ENCODE measurements at regions of chr7 and their contacts with region 1.

Region 1: DNA sequence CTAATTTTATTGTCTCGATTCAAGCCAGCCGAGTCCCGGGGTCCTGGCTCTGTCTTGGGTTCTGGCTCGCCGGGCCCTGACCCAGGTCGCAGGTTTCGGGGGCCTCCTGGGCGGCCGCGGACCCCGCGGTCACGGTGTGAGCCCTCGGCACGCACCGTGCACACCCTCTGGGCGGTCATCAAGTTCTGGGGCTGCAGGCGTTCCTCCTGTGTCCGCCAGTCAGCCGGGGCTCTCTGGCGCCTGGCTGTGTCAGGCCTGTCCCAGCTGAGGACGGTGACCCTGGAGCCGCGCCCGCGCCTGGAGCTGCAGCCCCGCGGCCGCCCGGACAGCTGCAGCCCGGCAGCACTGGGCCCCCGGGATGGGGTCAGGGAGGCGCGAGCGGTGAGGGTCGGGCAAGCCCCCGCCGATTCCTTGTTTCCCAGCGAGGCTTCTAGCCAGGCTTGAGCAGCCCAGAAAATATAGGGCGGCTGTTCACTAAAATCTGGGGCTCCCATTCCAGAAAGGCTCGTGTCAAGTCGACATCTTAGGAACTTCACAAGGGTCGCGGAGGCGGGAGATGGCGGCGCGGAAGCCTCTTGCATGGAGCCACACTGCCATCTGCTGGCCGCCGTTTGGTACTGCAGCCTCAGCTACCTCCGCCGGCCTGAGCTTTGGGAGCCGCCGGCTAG is 4.2 kb upstream of the HOXA7 start:
- DNase-seq: peak; percentile 63
- H3K4me3 Mint-ChIP-seq: peak overlapping the region; percentile 37
- H3K27ac Mint-ChIP-seq: no peak overlapping the region
- H3K4me1 Mint-ChIP-seq: peaks cover 11% of the 10 kb centered on the region
- H3K27me3 Mint-ChIP-seq: peaks cover 77% of the 10 kb centered on the region

Region 2: DNA sequence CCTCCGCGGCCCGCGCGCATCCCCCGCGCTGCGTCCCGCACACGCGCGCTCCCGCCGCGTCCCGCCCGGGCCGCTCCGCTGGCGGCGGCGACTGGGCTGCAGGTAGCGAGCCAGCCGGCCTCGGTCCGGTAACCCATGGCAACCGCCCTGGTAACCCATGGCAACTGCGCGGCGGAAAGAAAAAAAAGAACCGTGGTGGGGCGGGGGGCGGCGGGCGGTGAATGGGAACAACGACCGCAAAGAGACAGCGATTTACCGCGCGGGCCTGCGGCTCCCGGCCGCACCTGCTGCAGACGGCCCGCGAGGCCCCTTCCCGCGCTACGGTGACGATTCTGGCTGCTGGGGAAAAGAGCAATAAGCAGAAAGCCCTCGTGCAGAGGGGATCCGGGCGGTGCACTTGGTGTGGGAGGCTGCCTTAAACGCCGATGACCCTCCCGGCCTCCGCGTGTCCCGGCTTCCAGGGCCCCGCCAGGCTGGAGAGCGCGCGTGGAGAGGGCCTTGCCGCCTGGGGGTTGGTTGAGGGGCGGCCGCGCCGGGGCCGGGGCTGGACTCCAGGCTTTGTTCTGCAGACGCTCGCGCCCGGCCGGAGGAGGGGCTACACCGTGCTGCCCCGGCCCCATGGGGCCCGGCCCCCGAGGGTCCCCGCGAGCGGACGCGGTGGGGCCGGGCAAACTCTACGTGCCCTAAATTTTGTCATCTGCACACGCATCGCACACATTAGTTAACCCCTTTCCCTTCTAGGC is 784.3 kb before region 1 on chr7:
- intact Hi-C with region 1: loop called (anchors 1 kb)
- DNase-seq: peak; percentile 20
- H3K4me3 Mint-ChIP-seq: peak overlapping the region; percentile 79
- H3K27ac Mint-ChIP-seq: peak overlapping the region; percentile 79
- H3K4me1 Mint-ChIP-seq: peaks cover 7% of the 10 kb centered on the region
- H3K27me3 Mint-ChIP-seq: peaks cover 30% of the 10 kb centered on the region

Region 3: DNA sequence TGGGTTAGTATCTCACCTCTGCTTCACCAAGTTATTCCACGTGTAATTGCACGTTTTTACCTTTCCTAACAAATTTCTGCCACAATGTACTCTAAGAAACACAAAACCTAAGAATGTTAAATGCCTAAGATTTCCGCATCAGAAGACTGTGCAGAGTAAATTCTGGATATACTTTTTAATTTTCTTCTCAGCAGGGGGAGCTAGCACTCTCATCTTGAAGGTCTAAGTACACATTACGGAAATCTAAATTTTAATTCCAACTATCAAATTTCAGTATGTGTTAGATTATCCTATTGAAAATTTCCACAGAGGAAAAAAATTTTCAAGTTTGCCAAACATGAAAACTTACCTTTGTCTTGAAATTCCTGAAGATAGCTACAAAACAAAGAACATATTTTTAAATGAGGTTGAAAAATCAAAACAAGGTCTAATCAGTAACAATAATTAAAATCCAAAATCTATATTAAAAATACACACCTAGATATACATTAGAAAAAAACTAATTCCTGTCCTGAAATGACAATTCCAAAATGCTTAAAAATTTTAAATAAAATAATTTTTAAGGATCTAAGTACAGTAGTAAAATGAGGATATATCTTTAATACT is 306.8 kb before region 1 on chr7:
- intact Hi-C with region 1: loop called (anchors 1 kb)
- DNase-seq: no peak
- H3K4me3 Mint-ChIP-seq: no peak overlapping the region
- H3K27ac Mint-ChIP-seq: no peak overlapping the region
- H3K4me1 Mint-ChIP-seq: no peaks in the 10 kb centered on the region
- H3K27me3 Mint-ChIP-seq: peaks cover 41% of the 10 kb centered on the region

Region 4: DNA sequence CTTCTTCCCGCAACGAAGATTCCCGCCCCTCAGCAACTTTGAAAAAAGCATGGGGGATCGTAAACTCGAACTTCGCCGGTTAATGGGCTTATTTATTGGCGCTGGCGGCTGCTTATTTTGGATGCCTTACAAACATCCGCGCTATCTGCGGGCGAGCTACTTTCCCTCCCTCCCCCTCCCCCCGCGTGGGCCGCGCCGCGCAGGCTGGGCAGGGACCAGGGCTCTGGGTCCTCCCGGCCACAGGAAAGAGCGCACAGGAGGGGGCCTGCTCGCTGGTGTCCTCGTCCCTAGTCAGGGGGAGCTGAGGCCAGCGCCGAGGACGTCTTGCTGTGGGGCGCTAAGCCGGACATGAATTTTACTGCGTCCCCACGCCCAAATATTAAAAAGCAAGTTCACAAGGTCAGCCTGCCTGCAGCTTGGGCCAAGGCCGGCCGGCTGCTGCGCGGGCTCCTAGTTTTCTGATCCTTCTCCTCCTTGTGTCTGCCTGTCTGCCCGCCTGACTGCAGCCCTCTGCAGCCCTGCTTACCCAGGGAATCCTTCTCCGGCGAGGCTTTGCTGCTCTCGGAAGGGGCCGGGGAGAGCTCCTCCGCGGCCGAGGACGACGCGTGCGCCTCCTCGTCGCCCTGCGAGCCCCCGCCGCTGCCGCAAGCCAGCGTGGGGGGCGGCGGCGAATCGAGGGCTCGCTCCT is 12.3 kb after region 1 on chr7:
- intact Hi-C with region 1: loop called (anchors 2 kb)
- DNase-seq: no peak
- H3K4me3 Mint-ChIP-seq: no peak overlapping the region
- H3K27ac Mint-ChIP-seq: peak overlapping the region; percentile 92
- H3K4me1 Mint-ChIP-seq: peaks cover 8% of the 10 kb centered on the region
- H3K27me3 Mint-ChIP-seq: peaks cover 53% of the 10 kb centered on the region

Region 5: DNA sequence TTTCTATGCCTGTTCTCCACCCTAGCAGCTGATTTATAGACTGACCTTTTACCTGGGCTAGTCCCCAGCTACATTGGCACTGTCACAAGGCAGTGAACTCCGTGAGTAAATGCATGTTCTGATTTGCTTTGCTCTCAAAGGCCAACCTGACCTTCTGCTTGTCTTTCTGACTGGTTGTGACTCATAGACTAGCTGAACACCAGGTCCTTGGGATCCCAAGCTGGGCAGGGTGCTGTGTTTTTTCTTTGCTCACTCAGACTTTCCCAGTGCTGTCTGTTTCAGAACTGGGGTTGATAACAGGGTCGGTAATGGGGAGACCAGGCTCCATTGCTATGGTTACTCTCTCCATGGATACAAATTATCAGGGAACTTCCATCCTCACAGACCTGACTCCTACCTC is 116.9 kb after region 1 on chr7:
- intact Hi-C with region 1: no loop called
- DNase-seq: no peak
- H3K4me3 Mint-ChIP-seq: no peak overlapping the region
- H3K27ac Mint-ChIP-seq: no peak overlapping the region
- H3K4me1 Mint-ChIP-seq: no peaks in the 10 kb centered on the region
- H3K27me3 Mint-ChIP-seq: no peaks in the 10 kb centered on the region

Measured in activated T-helper 1 cell treated with anti-CD3 and anti-CD28 coated beads, Interleukin-12 subunit alpha, Interleukin-12 subunit beta, Interleukin-2, Interleukin-4 antibody, amounts not matched to agents 30 ng/mL and 10 ng/mL and 1 ng/mL, durations not matched to agents 14 hours and 24 hours and 36 hours (primary cell).